ENCODE measurements at regions of chr10 and their contacts with region 1.

Region 1: DNA sequence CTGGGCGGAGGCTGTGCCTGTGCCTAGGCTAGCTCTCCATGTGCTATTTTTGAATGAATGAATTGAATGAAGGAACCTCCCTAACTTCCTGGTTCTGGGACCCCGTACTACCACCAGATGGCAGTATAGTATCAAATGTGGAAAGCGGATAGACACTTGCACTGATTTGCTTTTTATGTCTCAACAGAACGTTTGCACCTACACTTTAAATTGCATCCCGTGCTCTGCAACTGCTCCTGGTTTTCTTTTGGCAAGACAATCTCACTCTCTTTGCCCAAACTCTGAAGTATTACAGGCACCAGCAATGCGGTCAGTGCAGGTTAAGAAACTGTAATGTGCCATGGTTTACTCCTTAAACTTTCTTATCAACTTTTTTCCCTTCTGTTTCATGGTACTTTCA is 6.5 kb downstream of the FZD8 start:
- DNase-seq: peak in 1 of 5 donors; percentile 29
- ATAC-seq: peak; percentile 56 to 73 (median 62)
- H3K4me3 ChIP-seq: no peak overlapping the region
- H3K27ac ChIP-seq: no peak overlapping the region
- H3K4me1 ChIP-seq: peaks cover 0 to 35% (median 10%) of the 10 kb centered on the region in 12 donors
- H3K27me3 ChIP-seq: peaks cover 0 to 22% (median 0%) of the 10 kb centered on the region in 9 donors
- CTCF ChIP-seq: peak; percentile 83 to 98 (median 92)
- POLR2A ChIP-seq: no peak

Region 2: GRCh38 chr10:35916791-35917190 is 281.2 kb after region 1 on chr10:
- intact Hi-C with region 1: loop called in 7 of 10 experiments (anchors 1 to 5 kb)
- DNase-seq: no peak
- ATAC-seq: peak in 1 of 4 donors; percentile 52
- H3K4me3 ChIP-seq: no peak overlapping the region
- H3K27ac ChIP-seq: no peak overlapping the region
- H3K4me1 ChIP-seq: peaks cover 0 to 10% (median 4%) of the 10 kb centered on the region in 12 donors
- H3K27me3 ChIP-seq: no peaks in the 10 kb centered on the region
- CTCF ChIP-seq: peak in 8 of 12 donors; percentile 6 to 43 (median 24)
- POLR2A ChIP-seq: no peak

Region 3: DNA sequence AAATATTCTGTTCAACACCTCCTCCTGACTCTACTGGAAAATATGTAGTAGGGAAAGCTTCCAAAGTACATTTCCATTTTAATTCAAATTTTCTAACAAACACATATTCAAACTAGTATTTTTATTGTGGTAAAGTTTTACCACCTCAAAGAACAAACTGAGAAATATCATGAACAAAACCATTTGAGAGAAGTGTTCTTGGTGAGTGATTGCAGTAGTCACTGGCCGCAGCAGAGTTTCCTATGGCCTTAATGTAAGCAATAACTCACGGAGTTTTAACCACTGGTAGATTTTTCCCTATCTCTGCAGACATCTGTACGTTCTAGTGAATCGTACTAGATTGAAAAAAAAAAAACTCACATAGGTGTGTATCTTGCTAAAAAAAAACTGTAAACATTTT is 493.5 kb after region 1 on chr10:
- intact Hi-C with region 1: no loop called
- DNase-seq: no peak
- ATAC-seq: no peak
- H3K4me3 ChIP-seq: no peak overlapping the region
- H3K27ac ChIP-seq: no peak overlapping the region
- H3K4me1 ChIP-seq: no peaks in the 10 kb centered on the region
- H3K27me3 ChIP-seq: no peaks in the 10 kb centered on the region
- CTCF ChIP-seq: no peak
- POLR2A ChIP-seq: no peak

Region 4: DNA sequence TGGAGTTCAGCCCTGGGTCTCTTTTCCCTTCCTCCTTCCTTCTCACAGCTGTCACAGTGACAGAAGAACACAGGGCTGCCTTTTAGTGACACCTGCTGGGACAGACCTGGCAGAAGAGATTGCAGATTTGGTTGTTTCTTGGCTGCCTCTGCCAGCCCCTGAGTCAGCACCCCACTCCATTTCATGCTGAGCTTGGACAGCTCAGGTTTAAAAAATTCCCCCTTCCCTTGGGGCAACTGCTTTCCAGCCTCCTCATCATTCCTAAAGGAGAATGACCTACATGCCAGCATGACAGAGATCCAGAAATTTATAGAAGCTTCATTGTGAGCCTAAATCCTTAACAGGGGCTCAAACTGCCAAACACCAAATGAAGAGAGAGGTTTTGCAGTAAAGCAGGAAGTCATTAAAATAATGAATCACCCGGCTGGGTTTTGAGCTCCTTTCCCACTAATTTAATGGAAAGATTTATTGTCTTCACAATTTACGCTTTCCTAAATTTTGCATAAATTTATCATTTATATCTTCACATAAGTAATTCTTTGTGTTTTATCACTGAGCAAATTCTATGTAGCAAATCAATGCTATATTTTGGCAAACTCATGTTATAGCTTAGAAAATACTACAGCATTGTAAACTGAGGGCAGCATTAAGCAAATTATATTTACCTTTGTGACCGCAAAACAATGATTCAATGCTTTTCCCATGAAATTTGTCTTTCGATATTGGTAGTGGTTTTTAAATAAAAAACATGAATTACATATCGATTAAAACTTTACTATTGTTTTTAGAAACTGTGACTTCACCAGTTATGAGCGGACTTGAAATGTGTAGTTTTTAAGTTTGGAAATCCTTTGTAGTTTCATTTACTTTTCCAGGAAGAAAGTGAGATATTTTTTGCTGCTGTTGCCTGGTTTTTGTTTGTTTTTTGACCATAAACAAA is 1090.3 kb after region 1 on chr10:
- intact Hi-C with region 1: loop called in 3 of 10 experiments (anchors 5 kb)
- DNase-seq: peak in 3 of 5 donors; percentile 11 to 50 (median 28)
- ATAC-seq: peak in 3 of 4 donors; percentile 69 to 91 (median 78)
- H3K4me3 ChIP-seq: no peak overlapping the region
- H3K27ac ChIP-seq: no peak overlapping the region
- H3K4me1 ChIP-seq: no peaks in the 10 kb centered on the region
- H3K27me3 ChIP-seq: no peaks in the 10 kb centered on the region
- CTCF ChIP-seq: peak in 9 of 12 donors; percentile 8 to 48 (median 32)
- POLR2A ChIP-seq: no peak

Region 5: GRCh38 chr10:36872702-36873393 is 1237.3 kb after region 1 on chr10:
- intact Hi-C with region 1: loop called in 2 of 10 experiments (anchors 5 to 10 kb)
- DNase-seq: no peak
- ATAC-seq: no peak
- H3K4me3 ChIP-seq: no peak overlapping the region
- H3K27ac ChIP-seq: no peak overlapping the region
- H3K4me1 ChIP-seq: peaks cover 0 to 2% (median 0%) of the 10 kb centered on the region in 12 donors
- H3K27me3 ChIP-seq: no peaks in the 10 kb centered on the region
- CTCF ChIP-seq: no peak
- POLR2A ChIP-seq: no peak

Region 6: GRCh38 chr10:36888929-36889573 is 1253.5 kb after region 1 on chr10:
- intact Hi-C with region 1: loop called in 7 of 10 experiments (anchors 5 to 10 kb)
- DNase-seq: no peak
- ATAC-seq: no peak
- H3K4me3 ChIP-seq: no peak overlapping the region
- H3K27ac ChIP-seq: no peak overlapping the region
- H3K4me1 ChIP-seq: peaks cover 0 to 5% (median 0%) of the 10 kb centered on the region in 12 donors
- H3K27me3 ChIP-seq: no peaks in the 10 kb centered on the region
- CTCF ChIP-seq: no peak
- POLR2A ChIP-seq: no peak

Measured in heart left ventricle (tissue), 16 donors.